ENCODE measurements at regions of chr10 and their contacts with region 1.

Region 1: GRCh38 chr10:73634421-73634820 is 6.9 kb downstream of the MYOZ1 start:
- DNase-seq: no peak
- H3K4me3 ChIP-seq: no peak overlapping the region
- H3K27ac ChIP-seq: no peak overlapping the region
- H3K4me1 ChIP-seq: no peaks in the 10 kb centered on the region
- H3K27me3 ChIP-seq: no peaks in the 10 kb centered on the region
- CTCF ChIP-seq: no peak
- POLR2A ChIP-seq: no peak

Region 2: GRCh38 chr10:73252445-73253224 is 381.8 kb before region 1 on chr10 and contains the start of gene MRPS16:
- intact Hi-C with region 1: no loop called
- DNase-seq: peak; percentile 93 to 98 (median 97)
- H3K4me3 ChIP-seq: peak within 1 kb of the TSS; percentile 15 to 95 (median 72)
- H3K27ac ChIP-seq: peak within 1 kb of the TSS; percentile 83 to 99 (median 92)
- H3K4me1 ChIP-seq: peaks cover 23 to 30% of the 10 kb centered on the region in 2 donors
- H3K27me3 ChIP-seq: no peaks in the 10 kb centered on the region
- CTCF ChIP-seq: peak in 2 of 6 experiments; percentile 12 to 18
- POLR2A ChIP-seq: peak; percentile 41 to 89
- total RNA-seq, gene MRPS16: 37.6 to 128 (median 90.7) TPM

Region 3: DNA sequence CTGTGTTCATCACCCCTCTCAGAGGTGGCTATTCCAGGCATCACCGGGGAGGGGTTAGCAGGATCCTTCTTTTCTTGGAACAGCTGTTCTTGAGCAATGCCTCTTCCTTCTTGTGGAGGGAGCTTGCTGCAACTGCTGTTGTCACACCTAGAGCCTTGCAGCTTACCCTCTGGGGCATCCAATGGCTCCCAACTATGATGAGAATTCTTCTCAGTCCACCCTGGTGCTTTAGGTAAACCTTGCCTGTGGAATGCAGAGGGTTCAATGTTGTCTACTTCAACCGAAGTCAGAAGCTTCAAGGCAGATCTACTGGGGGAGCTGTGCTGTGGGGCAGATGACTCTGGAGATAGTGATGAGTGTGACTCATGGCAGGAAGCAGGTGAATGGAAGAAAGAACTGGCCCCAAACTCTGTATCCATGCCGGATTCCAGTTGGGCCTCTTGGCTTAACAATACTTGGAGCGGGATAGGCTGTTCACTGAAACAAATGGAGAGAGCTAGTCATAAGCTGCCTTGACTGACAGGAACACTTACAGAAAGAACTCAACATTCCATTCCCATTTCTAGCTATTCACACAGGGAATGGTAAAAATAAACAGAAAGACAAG is 117.0 kb before region 1 on chr10:
- intact Hi-C with region 1: no loop called
- DNase-seq: no peak
- H3K4me3 ChIP-seq: no peak overlapping the region
- H3K27ac ChIP-seq: no peak overlapping the region
- H3K4me1 ChIP-seq: no peaks in the 10 kb centered on the region
- H3K27me3 ChIP-seq: no peaks in the 10 kb centered on the region
- CTCF ChIP-seq: no peak
- POLR2A ChIP-seq: no peak

Region 4: DNA sequence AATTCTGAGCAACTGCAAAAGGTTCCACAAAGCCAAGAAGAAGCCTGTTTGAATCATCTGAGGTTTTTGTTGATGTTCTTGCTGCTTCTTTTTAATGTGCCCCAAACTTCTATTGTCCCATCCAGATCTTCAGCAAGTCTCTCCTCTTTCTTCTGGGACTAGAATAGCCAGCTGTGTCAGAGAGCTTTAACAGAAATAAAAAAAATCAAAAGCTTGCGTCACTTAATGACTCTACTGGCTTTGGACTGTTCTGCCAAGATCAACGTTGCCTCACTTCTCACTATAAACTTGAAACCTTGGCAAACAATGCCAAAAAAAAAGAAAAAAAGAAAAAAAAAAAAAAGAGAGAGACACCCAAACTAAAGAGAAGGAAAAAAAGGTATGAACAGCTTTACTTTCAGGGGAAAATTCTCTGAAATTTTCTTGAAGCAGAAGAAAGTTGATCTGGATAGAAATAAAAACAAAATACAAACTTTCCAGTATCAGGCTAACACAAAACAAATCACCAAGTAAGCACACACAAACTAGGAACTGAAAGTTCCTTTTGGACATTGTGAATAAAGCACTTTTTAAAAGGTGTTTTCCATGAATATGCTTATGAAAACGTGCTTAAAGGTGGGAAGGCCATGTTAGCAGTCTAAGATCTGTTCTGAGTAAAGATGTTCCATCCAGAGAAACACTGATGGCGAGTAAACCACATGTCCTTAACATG is 58.1 kb before region 1 on chr10:
- intact Hi-C with region 1: loop called in 1 of 2 experiments (anchors 10 kb)
- DNase-seq: peak in 6 of 7 donors; percentile 24 to 80 (median 68)
- H3K4me3 ChIP-seq: no peak overlapping the region
- H3K27ac ChIP-seq: peak overlapping the region in 1 of 5 donors; percentile 70
- H3K4me1 ChIP-seq: peaks cover 9 to 26% of the 10 kb centered on the region in 2 donors
- H3K27me3 ChIP-seq: no peaks in the 10 kb centered on the region
- CTCF ChIP-seq: no peak
- POLR2A ChIP-seq: peak in 1 of 2 donors; percentile 21